ENCODE measurements at regions of chr1 and their contacts with region 1.

Region 1: GRCh38 chr1:110106013-110106941 is 6.0 kb upstream of the UBL4B start:
- DNase-seq: peak; percentile 74
- ATAC-seq: peak; percentile 91

Region 2: DNA sequence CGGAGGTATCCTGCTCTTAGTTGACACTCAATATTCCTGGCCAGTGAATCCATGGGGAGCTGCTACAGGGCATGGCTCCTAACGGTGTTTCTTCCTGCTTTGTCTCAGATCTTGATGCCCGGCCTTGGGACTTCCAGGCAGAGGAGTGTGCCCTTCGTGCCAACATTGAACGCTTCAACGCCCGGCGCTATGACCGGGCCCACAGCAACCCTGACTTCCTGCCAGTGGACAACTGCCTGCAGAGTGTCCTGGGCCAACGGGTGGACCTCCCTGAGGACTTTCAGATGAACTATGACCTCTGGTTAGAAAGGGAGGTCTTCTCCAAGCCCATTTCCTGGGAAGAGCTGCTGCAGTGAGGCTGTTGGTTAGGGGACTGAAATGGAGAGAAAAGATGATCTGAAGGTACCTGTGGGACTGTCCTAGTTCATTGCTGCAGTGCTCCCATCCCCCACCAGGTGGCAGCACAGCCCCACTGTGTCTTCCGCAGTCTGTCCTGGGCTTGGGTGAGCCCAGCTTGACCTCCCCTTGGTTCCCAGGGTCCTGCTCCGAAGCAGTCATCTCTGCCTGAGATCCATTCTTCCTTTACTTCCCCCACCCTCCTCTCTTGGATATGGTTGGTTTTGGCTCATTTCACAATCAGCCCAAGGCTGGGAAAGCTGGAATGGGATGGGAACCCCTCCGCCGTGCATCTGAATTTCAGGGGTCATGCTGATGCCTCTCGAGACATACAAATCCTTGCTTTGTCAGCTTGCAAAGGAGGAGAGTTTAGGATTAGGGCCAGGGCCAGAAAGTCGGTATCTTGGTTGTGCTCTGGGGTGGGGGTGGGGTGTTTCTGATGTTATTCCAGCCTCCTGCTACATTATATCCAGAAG is 52.5 kb before region 1 on chr1:
- intact Hi-C with region 1: loop called (anchors 2 kb)
- DNase-seq: peak; percentile 77
- ATAC-seq: peak; percentile 89

Region 3: GRCh38 chr1:110123224-110123623 is 16.9 kb after region 1 on chr1:
- intact Hi-C with region 1: no loop called
- DNase-seq: no peak
- ATAC-seq: no peak

Measured in Right ventricle myocardium superior (tissue), 1 donor.